ENCODE measurements at regions of chr19 and their contacts with region 1.

Region 1: GRCh38 chr19:53195265-53195903 is 2.2 kb upstream of the ZNF665 start:
- DNase-seq: no peak
- H3K4me3 ChIP-seq: no peak overlapping the region
- H3K27ac ChIP-seq: peak overlapping the region in 1 of 4 donors; percentile 42
- H3K4me1 ChIP-seq: peaks cover 4 to 42% (median 6%) of the 10 kb centered on the region in 3 donors
- H3K27me3 ChIP-seq: no peaks in the 10 kb centered on the region
- CTCF ChIP-seq: peak; percentile 70 to 91 (median 88)
- POLR2A ChIP-seq: no peak

Region 2: DNA sequence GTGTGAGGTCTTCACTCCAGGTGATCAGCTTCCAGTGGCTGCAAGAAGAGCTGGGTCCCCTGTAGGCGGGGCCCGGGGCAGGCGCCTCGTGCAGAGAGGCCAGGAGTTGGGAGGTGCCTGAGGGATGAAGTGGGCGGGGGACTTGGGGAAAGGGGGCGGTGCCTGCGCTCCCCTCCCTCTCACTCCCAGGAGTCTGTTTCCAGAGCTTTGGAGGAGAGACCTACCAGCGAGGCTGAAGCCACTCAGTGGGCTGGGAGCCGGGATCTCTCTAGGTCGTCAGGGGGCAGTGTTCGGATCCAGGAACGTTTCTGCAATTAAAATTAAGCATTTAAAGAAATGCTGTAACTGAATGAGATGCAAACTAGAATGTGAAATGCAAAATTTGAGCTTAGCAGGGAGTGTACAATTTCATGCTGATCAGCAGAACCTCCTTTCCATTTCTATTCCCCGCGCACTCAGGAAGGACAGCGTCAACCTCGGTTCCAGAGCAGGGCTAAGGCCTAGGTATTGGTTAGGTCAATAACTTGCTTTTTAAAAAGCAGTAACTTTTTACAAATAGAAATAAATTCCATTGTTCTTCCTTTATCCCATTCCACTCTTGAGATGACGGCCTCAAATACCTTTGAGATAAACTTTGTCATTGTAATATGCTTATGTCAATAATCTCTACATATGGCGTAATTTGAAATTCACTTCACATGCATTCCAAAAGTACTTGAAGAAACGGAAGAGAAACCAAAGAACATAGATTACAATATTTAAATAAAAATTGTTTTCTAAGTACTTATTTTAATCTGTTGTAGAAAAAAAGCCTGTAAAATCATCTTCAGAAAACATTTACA is 103.8 kb before region 1 on chr19:
- intact Hi-C with region 1: no loop called
- DNase-seq: no peak
- H3K4me3 ChIP-seq: no peak overlapping the region
- H3K27ac ChIP-seq: no peak overlapping the region
- H3K4me1 ChIP-seq: no peaks in the 10 kb centered on the region
- H3K27me3 ChIP-seq: no peaks in the 10 kb centered on the region
- CTCF ChIP-seq: no peak
- POLR2A ChIP-seq: no peak

Region 3: GRCh38 chr19:53365134-53365898 is 169.9 kb after region 1 on chr19 and contains the start of gene ZNF525:
- intact Hi-C with region 1: loop called (anchors 10 kb)
- DNase-seq: peak; percentile 59
- H3K4me3 ChIP-seq: peak within 1 kb of the TSS; percentile 56 to 69 (median 66)
- H3K27ac ChIP-seq: peak within 1 kb of the TSS; percentile 61 to 87 (median 79)
- H3K4me1 ChIP-seq: peaks cover 0 to 8% (median 0%) of the 10 kb centered on the region in 3 donors
- H3K27me3 ChIP-seq: no peaks in the 10 kb centered on the region
- CTCF ChIP-seq: peak in 3 of 6 experiments; percentile 16 to 30 (median 26)
- POLR2A ChIP-seq: peak in 1 of 4 donors; percentile 44
- total RNA-seq, gene ZNF525: 2.3 to 17.4 (median 6.2) TPM

Measured in esophagus squamous epithelium (tissue), 5 donors.